ENCODE measurements at regions of chr7 and their contacts with region 1.

Region 1: GRCh38 chr7:134954197-134955082 is 31.9 kb upstream of the AGBL3 start:
- DNase-seq: no peak
- H3K4me3 ChIP-seq: no peak overlapping the region
- H3K27ac ChIP-seq: no peak overlapping the region
- H3K4me1 ChIP-seq: no peaks in the 10 kb centered on the region
- H3K27me3 ChIP-seq: no peaks in the 10 kb centered on the region
- CTCF ChIP-seq: peak; percentile 39 to 55 (median 53)
- EP300 ChIP-seq: no peak
- POLR2A ChIP-seq: no peak

Region 2: DNA sequence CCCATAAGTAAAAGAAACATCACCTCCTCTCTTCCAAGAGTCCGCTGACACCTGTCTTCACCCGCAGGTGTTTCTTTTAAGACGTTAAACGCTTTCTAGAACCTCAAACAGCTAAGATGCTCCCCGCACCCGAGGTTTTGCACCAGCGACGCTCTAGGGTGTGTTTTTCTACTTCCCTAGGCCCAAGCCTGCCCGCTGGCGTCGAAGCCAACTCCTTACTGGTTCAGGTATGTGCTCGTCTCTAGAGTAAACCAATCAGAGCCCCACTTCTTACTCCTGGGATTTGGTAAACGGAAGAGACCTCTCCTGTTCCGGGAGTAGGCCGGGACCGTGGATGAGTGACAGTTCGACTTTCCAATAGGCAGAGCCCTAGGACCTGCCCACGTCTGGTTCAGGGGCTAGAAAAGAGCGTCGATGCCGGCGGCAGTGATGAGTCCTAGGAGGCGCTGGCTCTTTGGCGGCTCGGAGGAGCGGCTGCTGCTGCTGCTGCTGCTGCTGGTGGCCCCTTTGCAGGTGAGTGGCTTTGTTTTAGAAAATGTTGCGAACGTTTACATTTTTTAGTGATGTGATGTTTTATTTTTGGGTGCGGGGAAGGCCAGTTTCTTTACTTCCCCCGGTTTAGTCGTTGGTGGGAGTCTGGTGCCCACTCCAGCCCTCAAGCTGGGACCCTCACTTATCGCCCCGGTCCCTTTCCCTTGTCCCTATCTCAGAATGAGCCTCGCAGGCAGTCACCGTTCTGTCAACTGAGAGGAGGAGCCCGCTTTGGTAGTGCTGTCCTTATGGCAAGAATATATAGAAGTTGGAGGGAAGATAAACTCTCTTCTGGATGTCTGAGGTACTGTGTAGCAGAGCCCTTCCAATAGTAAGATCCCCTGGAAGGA is 307.8 kb before region 1 on chr7 and contains the start of gene BPGM:
- in situ Hi-C with region 1: loop called in 1 of 4 experiments (anchors 25 kb)
- intact Hi-C with region 1: no loop called
- DNase-seq: peak; percentile 98
- H3K4me3 ChIP-seq: peak within 1 kb of the TSS; percentile 55 to 73 (median 60)
- H3K27ac ChIP-seq: peak within 1 kb of the TSS; percentile 84 to 91 (median 88)
- H3K4me1 ChIP-seq: peaks cover 0 to 19% (median 17%) of the 10 kb centered on the region in 4 donors
- H3K27me3 ChIP-seq: no peaks in the 10 kb centered on the region
- CTCF ChIP-seq: no peak
- EP300 ChIP-seq: no peak
- POLR2A ChIP-seq: peak; percentile 98
- total RNA-seq, gene BPGM: 0.40 to 13.2 (median 7.2) TPM

Region 3: GRCh38 chr7:135083005-135083404 is 128.6 kb after region 1 on chr7:
- in situ Hi-C with region 1: no loop called
- intact Hi-C with region 1: no loop called
- DNase-seq: no peak
- H3K4me3 ChIP-seq: no peak overlapping the region
- H3K27ac ChIP-seq: no peak overlapping the region
- H3K4me1 ChIP-seq: no peaks in the 10 kb centered on the region
- H3K27me3 ChIP-seq: no peaks in the 10 kb centered on the region
- CTCF ChIP-seq: no peak
- EP300 ChIP-seq: no peak
- POLR2A ChIP-seq: no peak

Region 4: DNA sequence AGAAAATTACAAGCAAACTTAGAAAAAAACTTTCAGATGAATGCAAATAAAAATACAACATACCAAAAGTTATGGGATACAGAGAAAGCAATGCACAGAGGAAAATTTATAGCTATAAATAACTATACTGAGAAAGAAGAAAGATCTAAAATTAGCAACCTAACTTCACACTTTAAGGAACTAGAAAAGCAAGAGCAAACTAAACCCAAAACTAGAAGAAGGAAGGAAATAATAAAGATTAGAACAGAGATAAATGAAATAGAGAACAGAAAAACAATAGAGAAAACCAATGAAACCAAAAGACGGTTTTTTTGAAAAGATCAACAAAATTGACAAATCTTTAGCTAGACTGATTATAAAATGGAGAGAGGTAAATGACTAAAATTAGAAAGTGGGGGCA is 269.6 kb after region 1 on chr7:
- in situ Hi-C with region 1: no loop called
- intact Hi-C with region 1: no loop called
- DNase-seq: no peak
- H3K4me3 ChIP-seq: no peak overlapping the region
- H3K27ac ChIP-seq: no peak overlapping the region
- H3K4me1 ChIP-seq: no peaks in the 10 kb centered on the region
- H3K27me3 ChIP-seq: no peaks in the 10 kb centered on the region
- CTCF ChIP-seq: no peak
- EP300 ChIP-seq: no peak
- POLR2A ChIP-seq: no peak